Posterior vena cava (tissue), 2 donors: ENCODE measurements at regions of chr5 and their contacts with region 1.

Region 1: DNA sequence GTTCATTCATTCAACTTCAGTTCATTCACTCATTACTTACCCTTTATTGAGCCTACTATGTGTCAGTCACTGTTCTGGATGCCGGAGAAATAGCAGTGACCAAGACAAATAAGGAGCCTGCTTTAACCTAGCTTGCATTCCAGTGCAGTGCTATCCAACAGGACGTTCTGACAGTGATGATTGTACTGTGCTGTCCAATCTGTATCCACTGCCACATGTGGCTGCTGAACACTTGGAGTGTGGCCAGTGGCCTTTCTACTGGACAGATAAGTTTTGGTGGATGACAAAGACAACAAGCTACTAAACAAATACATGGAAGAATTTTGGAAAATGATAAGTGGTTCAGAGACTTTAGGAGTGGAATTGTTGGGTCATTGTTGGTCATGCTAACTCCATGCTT is 33.6 kb downstream of the SUB1 start:
- DNase-seq: no peak

Region 2: DNA sequence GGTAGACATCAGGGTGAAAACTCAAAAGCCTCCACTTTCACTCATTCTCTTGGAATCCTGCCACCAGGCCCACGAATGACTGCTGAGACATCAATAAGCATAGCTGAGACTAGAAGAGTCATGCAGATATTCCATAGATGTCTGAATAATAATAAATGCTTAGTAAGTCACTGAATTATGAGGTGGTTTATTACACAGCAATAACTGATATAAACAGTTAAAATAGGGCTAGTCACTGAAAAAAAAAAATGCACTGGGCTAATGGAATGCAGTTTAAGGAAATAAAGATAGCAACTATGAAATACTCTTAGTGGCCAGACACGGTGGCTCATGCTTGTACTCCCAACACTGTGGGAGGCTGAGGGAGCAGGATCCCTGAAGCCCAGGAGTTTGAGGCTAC is 1688.2 kb before region 1 on chr5:
- intact Hi-C with region 1: no loop called
- DNase-seq: no peak

Region 3: DNA sequence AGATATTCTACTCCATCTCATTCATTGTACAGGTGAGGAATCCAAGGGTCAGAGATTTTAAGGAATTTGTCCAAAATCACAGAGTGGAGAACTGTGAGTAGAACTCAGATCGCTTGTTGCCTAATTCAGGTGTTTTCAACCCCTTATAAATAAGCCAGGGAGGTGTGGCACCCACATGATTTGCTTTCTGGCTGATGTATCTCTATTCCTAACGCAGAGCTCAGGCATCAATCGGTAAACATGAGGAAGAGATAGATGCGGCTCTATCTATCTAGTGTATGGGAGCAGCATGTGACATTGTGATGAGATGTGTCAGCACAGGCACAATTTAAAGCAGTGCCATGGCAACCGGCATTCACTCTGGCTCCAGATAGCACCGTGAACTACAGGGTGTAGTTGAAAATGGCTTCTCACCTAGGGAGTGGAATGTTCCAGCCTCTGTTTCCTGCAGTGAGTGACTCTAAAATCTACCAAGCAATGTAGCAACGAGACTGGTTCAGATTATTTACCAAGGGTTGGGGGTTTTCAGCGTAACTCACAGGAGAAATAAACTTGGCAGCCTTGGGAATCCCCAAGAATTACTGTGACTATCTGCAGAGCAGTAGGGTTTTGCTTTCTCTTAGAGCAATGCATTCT is 87.0 kb before region 1 on chr5:
- intact Hi-C with region 1: no loop called
- DNase-seq: no peak

Region 4: GRCh38 chr5:32687167-32687831 is 68.3 kb after region 1 on chr5:
- intact Hi-C with region 1: loop called in 1 of 2 experiments (anchors 2 kb)
- DNase-seq: no peak